GM23248 (cell line): ENCODE measurements at regions of chr9 and their contacts with region 1.

Region 1: GRCh38 chr9:85610074-85610860 is 131.5 kb downstream of the AGTPBP1 start:
- DNase-seq: peak; percentile 78
- H3K4me3 ChIP-seq: peak overlapping the region; percentile 67
- H3K27ac ChIP-seq: no peak overlapping the region
- H3K4me1 ChIP-seq: no peaks in the 10 kb centered on the region
- H3K27me3 ChIP-seq: no peaks in the 10 kb centered on the region

Region 2: GRCh38 chr9:84397151-84397728 is 1213.0 kb before region 1 on chr9:
- in situ Hi-C with region 1: loop called (anchors 25 kb)
- DNase-seq: peak; percentile 82
- H3K4me3 ChIP-seq: no peak overlapping the region
- H3K27ac ChIP-seq: no peak overlapping the region
- H3K4me1 ChIP-seq: peaks cover 13% of the 10 kb centered on the region
- H3K27me3 ChIP-seq: no peaks in the 10 kb centered on the region

Region 3: GRCh38 chr9:85056203-85056572 is 554.1 kb before region 1 on chr9:
- in situ Hi-C with region 1: no loop called
- DNase-seq: no peak
- H3K4me3 ChIP-seq: no peak overlapping the region
- H3K27ac ChIP-seq: no peak overlapping the region
- H3K4me1 ChIP-seq: no peaks in the 10 kb centered on the region
- H3K27me3 ChIP-seq: no peaks in the 10 kb centered on the region

Region 4: GRCh38 chr9:85332487-85332886 is 277.8 kb before region 1 on chr9:
- in situ Hi-C with region 1: no loop called
- DNase-seq: peak; percentile 3
- H3K4me3 ChIP-seq: no peak overlapping the region
- H3K27ac ChIP-seq: no peak overlapping the region
- H3K4me1 ChIP-seq: no peaks in the 10 kb centered on the region
- H3K27me3 ChIP-seq: no peaks in the 10 kb centered on the region

Region 5: GRCh38 chr9:85662573-85662972 is 52.3 kb after region 1 on chr9:
- in situ Hi-C with region 1: no loop called
- DNase-seq: no peak
- H3K4me3 ChIP-seq: no peak overlapping the region
- H3K27ac ChIP-seq: no peak overlapping the region
- H3K4me1 ChIP-seq: no peaks in the 10 kb centered on the region
- H3K27me3 ChIP-seq: no peaks in the 10 kb centered on the region